Sigmoid colon (tissue), 7 donors: ENCODE measurements at regions of chr7 and their contacts with region 1.

Region 1: DNA sequence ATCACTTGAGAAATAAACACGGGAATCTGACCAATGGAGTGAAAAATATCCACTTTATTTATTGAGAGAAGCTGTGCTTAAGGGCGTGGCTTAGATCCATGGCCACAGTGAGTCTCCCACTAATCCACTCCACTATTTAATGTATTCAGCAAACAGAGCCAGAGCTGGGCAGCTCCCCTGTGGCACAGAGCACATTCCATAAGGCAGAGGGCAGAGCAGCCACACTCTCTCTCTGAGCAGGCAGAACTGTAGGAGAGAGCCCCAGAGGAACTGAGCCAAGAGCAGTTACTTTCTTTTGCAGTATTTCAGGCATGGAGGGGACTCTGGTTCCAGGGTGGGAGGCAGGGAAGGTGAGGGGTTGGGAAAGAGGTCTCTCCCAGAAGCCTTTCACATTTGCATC is 106.0 kb downstream of the GALNT17 start:
- DNase-seq: peak; percentile 79
- H3K4me3 ChIP-seq: no peak overlapping the region
- H3K27ac ChIP-seq: peak overlapping the region; percentile 67 to 90 (median 82)
- H3K4me1 ChIP-seq: peaks cover 0 to 49% (median 46%) of the 10 kb centered on the region in 4 donors
- H3K27me3 ChIP-seq: no peaks in the 10 kb centered on the region
- CTCF ChIP-seq: peak in 3 of 4 experiments; percentile 14 to 49 (median 34)
- EP300 ChIP-seq: no peak
- POLR2A ChIP-seq: no peak

Region 2: DNA sequence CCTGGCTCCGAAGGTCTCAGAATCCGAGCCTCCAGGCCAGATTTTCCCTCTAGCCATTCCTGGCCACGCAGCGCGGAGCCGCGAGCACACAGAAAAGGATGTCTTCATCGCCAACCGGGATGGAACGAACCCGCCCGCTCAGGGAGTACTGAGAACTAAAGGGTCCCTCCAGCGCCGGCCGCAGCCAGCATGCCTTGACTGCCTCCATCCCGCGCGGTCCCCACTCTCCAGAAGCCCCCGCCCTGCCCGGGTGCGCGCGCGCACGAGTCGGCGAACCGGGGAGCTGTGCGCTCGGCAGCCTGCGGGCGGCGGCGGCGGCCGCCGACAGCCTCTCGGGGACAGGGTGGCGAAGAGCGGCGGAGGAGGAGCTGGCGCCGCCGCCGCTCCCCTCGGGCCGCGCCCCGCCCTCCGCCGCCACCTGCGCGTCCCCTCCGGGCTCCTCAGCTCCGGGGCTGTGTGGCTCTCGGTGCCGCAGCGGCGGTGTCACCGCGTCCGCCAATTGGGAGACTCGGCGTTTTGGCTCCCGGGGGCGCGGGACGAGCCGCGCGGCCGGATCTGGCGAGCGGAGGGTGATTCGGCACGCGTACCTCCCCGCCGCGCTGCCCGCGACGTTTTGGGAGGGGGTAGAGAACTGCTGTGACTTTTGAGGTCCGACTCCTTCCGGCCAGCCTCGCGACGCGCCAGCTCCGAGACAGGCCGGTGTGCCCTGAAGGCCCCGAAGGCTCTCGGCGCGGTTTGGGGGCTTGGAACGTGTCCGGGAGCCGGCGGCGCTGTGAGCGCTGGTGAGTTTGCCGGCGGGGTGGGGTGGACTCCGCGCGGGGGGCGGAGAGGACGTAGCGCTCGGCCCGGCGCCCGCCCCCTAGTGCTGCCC is 106.5 kb before region 1 on chr7:
- intact Hi-C with region 1: loop called (anchors 5 kb)
- DNase-seq: peak; percentile 77
- H3K4me3 ChIP-seq: peak overlapping the region; percentile 52 to 86 (median 78)
- H3K27ac ChIP-seq: peak overlapping the region; percentile 77 to 90 (median 80)
- H3K4me1 ChIP-seq: peaks cover 0 to 44% (median 16%) of the 10 kb centered on the region in 4 donors
- H3K27me3 ChIP-seq: no peaks in the 10 kb centered on the region
- CTCF ChIP-seq: no peak
- EP300 ChIP-seq: no peak
- POLR2A ChIP-seq: no peak

Region 3: DNA sequence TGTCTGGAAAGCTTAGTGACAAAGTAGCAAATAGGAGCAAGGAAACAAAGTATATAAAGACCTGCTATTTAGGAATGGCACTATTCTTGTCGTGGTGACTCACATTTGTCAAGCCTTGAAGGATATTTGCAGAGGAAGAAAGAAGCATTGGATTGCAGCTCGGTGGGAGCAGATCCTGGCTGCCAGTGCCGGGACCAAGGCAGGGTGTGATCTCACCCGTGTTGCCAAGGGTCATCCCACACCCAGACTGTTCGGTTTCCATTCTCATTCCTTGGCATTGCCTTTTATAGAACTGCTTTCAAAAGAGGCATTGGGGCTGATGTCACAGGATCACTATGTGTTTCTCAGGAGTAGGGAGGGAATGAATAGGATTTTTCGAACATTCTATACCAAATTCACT is 70.2 kb after region 1 on chr7:
- intact Hi-C with region 1: loop called (anchors 5 kb)
- DNase-seq: peak; percentile 68
- H3K4me3 ChIP-seq: no peak overlapping the region
- H3K27ac ChIP-seq: peak overlapping the region; percentile 56 to 84 (median 78)
- H3K4me1 ChIP-seq: peaks cover 0 to 56% (median 38%) of the 10 kb centered on the region in 4 donors
- H3K27me3 ChIP-seq: no peaks in the 10 kb centered on the region
- CTCF ChIP-seq: no peak
- EP300 ChIP-seq: peak in 3 of 4 donors; percentile 19 to 23 (median 20)
- POLR2A ChIP-seq: no peak

Region 4: DNA sequence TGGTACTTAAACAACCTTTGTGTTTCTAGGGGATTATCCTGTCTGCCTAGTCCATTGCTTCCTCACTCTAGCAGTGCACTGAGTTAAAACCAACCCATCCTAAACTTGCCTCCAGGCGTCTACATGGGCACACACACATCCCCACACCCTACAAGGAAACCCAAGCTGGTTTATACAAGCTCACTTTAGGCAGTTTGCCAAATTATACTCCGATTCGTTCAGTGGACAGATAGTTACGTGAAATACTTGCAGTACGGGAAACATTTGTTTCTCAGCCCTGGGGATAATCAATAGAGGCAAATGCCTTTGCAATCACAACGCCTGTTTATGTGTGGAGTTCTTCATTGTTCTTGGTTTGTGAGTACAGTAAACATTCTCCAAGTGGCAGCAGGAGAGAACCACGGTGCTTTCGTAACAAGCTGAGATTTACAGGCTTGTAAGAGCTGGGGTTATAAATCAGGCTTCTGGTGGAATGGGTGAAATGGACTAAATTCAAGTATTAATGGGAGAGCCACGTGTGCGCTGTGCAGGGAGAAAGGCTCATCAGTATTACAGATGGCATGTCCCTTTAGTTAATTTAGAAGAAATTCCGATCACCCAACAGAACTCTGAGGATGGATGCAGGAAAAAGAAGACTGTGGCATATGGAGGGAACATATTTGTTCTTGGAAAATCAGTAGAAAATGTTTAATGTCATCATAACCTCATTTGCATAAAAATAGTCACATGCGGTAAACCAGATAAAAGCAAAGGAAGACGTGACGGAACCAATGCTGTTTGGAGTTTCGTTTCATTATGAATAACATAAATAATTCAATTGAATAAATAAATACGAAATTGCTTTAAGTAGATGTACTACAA is 111.1 kb after region 1 on chr7:
- intact Hi-C with region 1: loop called (anchors 5 kb)
- DNase-seq: no peak
- H3K4me3 ChIP-seq: peak overlapping the region in 3 of 4 donors; percentile 9 to 26 (median 25)
- H3K27ac ChIP-seq: peak overlapping the region; percentile 39 to 73 (median 60)
- H3K4me1 ChIP-seq: peaks cover 0 to 26% (median 9%) of the 10 kb centered on the region in 4 donors
- H3K27me3 ChIP-seq: no peaks in the 10 kb centered on the region
- CTCF ChIP-seq: peak in 1 of 4 experiments; percentile 20
- EP300 ChIP-seq: peak in 2 of 4 donors; percentile 56 to 65
- POLR2A ChIP-seq: no peak